ENCODE measurements at regions of chr9 and their contacts with region 1.

Region 1: DNA sequence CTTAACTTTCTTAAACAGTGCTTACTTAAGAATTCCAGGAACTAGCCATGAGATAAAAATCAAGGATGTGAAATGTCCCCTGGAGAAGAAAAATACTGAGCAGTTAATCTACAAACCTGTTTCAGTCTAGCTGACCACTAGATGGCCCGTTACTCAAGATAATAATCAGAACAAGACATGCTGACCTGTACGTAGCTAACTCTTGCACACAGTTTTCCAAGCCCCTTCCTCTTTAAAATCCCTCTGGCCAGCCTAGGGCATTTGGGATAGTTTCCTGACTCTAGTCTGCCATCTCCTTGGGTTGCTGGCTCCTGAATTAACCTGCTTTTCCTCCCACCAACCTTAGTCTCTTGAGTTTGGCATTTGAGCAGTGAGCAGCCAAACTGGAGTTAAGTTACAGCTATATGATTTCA is 59.2 kb upstream of the TRAF1 start:
- DNase-seq: peak; percentile 84
- H3K4me3 ChIP-seq: no peak overlapping the region
- H3K27ac ChIP-seq: no peak overlapping the region
- H3K4me1 ChIP-seq: peaks cover 17% of the 10 kb centered on the region
- H3K27me3 ChIP-seq: no peaks in the 10 kb centered on the region
- CTCF ChIP-seq: peak; percentile 54
- POLR2A ChIP-seq: no peak

Region 2: GRCh38 chr9:120755827-120756434 is 229.9 kb before region 1 on chr9:
- CTCF ChIA-PET with region 1: interaction called, 22 read pairs
- POLR2A ChIA-PET with region 1: no interaction called
- dilution Hi-C with region 1: no loop called
- intact Hi-C with region 1: loop called (anchors 2 kb)
- DNase-seq: peak; percentile 65
- H3K4me3 ChIP-seq: no peak overlapping the region
- H3K27ac ChIP-seq: no peak overlapping the region
- H3K4me1 ChIP-seq: no peaks in the 10 kb centered on the region
- H3K27me3 ChIP-seq: no peaks in the 10 kb centered on the region
- CTCF ChIP-seq: peak; percentile 70 to 74
- POLR2A ChIP-seq: no peak

Region 3: GRCh38 chr9:120944434-120944843 is 41.4 kb before region 1 on chr9:
- CTCF ChIA-PET with region 1: interaction called, 13 read pairs
- POLR2A ChIA-PET with region 1: no interaction called
- dilution Hi-C with region 1: no loop called
- intact Hi-C with region 1: no loop called
- DNase-seq: no peak
- H3K4me3 ChIP-seq: no peak overlapping the region
- H3K27ac ChIP-seq: no peak overlapping the region
- H3K4me1 ChIP-seq: peaks cover 54% of the 10 kb centered on the region
- H3K27me3 ChIP-seq: no peaks in the 10 kb centered on the region
- CTCF ChIP-seq: no peak
- POLR2A ChIP-seq: no peak

Region 4: GRCh38 chr9:121023064-121023463 is 37.2 kb after region 1 on chr9:
- CTCF ChIA-PET with region 1: interaction called, 12 read pairs
- POLR2A ChIA-PET with region 1: no interaction called
- dilution Hi-C with region 1: no loop called
- intact Hi-C with region 1: no loop called
- DNase-seq: no peak
- H3K4me3 ChIP-seq: no peak overlapping the region
- H3K27ac ChIP-seq: no peak overlapping the region
- H3K4me1 ChIP-seq: no peaks in the 10 kb centered on the region
- H3K27me3 ChIP-seq: no peaks in the 10 kb centered on the region
- CTCF ChIP-seq: no peak
- POLR2A ChIP-seq: no peak

Region 5: GRCh38 chr9:121074635-121075385 is 89.0 kb after region 1 on chr9 and contains the start of gene CNTRL:
- CTCF ChIA-PET with region 1: interaction called, 61 read pairs
- POLR2A ChIA-PET with region 1: no interaction called
- dilution Hi-C with region 1: no loop called
- intact Hi-C with region 1: loop called (anchors 1 kb)
- DNase-seq: peak; percentile 86
- H3K4me3 ChIP-seq: peak within 1 kb of the TSS; percentile 6 to 78 (median 36)
- H3K27ac ChIP-seq: peak within 1 kb of the TSS; percentile 56
- H3K4me1 ChIP-seq: peaks cover 25% of the 10 kb centered on the region
- H3K27me3 ChIP-seq: no peaks in the 10 kb centered on the region
- CTCF ChIP-seq: no peak
- POLR2A ChIP-seq: peak; percentile 49
- total RNA-seq, gene CNTRL: 21.8 and 22.0 TPM in 2 replicates

Region 6: DNA sequence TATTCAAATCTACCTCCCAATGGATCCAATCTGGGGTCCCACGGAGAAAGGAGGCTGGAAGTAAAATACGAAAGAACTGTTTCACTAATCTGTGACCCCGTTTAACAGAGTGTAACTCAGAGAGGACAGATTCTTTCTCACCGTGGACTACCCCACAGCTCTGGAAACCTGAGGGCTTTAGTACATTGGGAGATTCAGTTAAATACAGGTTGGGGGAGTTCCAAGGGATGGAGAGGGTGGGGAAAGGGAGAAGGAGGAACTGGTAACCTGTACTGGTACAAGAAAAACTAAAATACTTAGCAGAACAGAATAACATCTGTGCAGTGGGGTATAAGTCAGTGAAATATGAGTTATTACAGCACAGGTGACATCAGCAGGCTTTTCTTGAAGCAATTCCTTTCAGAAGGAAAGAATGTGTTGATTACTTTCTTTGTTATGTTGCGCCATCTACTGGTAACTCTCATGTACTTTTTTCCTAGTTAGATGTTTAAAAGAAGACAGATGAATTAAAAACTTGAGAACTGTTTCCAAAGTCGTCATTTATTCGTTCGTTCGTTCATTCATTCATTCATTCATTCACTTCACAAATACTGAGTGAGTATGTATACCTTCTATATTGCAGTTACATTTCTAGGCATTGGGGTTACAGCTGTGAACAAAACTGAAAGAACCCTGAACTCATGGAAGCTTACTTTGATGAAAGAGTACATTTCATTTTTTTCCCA is 414.2 kb after region 1 on chr9:
- CTCF ChIA-PET with region 1: interaction called, 7 read pairs
- POLR2A ChIA-PET with region 1: no interaction called
- dilution Hi-C with region 1: no loop called
- intact Hi-C with region 1: loop called (anchors 2 kb)
- DNase-seq: peak; percentile 82
- H3K4me3 ChIP-seq: no peak overlapping the region
- H3K27ac ChIP-seq: no peak overlapping the region
- H3K4me1 ChIP-seq: peaks cover 21% of the 10 kb centered on the region
- H3K27me3 ChIP-seq: no peaks in the 10 kb centered on the region
- CTCF ChIP-seq: peak; percentile 25 to 35
- POLR2A ChIP-seq: no peak